K562 (cell line): ENCODE measurements at regions of chr15 and their contacts with region 1.

Region 1: DNA sequence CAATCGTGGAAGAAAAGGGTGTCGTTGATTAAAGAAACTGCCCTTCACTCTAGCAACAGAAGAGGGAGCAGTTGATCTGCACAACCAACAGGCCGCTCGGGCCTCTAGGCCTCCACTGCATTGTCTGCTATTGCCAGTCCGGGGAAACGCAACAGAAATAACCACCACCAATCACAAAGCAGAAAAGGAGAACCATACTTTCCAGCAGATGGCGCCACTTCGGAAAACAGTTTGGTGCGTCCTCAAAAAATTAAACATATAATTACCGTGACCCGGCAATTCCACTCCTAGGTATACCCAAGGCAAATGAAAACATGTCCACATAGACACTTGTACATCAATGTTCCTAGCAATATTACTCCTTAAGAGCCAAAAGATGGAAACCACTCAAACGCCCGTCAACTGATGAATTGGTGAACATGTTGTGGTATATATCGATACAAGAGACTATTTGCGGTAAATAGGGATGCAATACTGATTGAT is 154.1 kb downstream of the TJP1 start:
- DNase-seq: peak; percentile 66 to 84 (median 72)
- ATAC-seq: peak; percentile 99
- H3K4me3 ChIP-seq: no peak overlapping the region
- H3K27ac ChIP-seq: no peak overlapping the region
- H3K4me1 ChIP-seq: peaks cover 3 to 9% of the 10 kb centered on the region in 2 experiments; a peak in 3 of 5 replicates
- H3K27me3 ChIP-seq: peaks cover 4 to 20% of the 10 kb centered on the region in 2 experiments; a peak in 4 of 5 replicates
- CTCF ChIP-seq: peak; percentile 89 to 97 (median 96)
- EP300 ChIP-seq: no peak
- POLR2A ChIP-seq: no peak
- RAD21 ChIP-seq: peak; percentile 84 to 91

Region 2: GRCh38 chr15:29692527-29692926 is 24.4 kb after region 1 on chr15:
- CTCF ChIA-PET with region 1: no interaction called
- POLR2A ChIA-PET with region 1: no interaction called
- in situ Hi-C with region 1: no loop called
- intact Hi-C with region 1: no loop called
- DNase-seq: no peak
- ATAC-seq: peak; percentile 46; the same call in 2 of the 3 replicates
- H3K4me3 ChIP-seq: no peak overlapping the region
- H3K27ac ChIP-seq: no peak overlapping the region
- H3K4me1 ChIP-seq: peaks cover 0 to 15% of the 10 kb centered on the region in 2 experiments; a peak in 3 of 5 replicates
- H3K27me3 ChIP-seq: no peaks in the 10 kb centered on the region
- CTCF ChIP-seq: peak; percentile 29 to 53 (median 34); a peak in 4 of 6 replicates
- EP300 ChIP-seq: no peak
- POLR2A ChIP-seq: no peak
- RAD21 ChIP-seq: peak in 1 of 2 experiments; percentile 43; a peak in 2 of 4 replicates

Region 3: DNA sequence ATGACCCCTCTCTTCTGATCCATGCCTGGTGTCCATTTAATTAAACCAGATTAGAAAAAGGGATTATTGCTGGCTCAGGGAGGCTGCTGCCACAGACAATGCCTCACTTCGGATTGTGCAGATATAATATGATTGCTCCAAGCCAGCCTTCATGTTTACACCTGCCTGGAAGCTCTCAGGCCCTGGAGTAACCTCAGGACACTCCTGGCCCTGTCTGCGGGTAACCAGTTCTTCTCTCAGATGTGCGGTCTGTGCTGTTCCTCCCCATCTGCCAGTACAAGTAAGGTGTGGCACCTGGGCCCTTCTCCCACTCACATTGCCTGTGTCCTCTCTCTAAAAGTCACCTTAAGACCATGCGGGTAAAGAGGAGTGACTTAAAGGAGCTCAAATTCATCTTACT is 405.8 kb after region 1 on chr15:
- CTCF ChIA-PET with region 1: no interaction called
- POLR2A ChIA-PET with region 1: no interaction called
- in situ Hi-C with region 1: loop called (anchors 10 kb)
- intact Hi-C with region 1: no loop called
- DNase-seq: no peak
- ATAC-seq: no peak
- H3K4me3 ChIP-seq: no peak overlapping the region
- H3K27ac ChIP-seq: no peak overlapping the region
- H3K4me1 ChIP-seq: no peaks in the 10 kb centered on the region
- H3K27me3 ChIP-seq: peaks cover 0 to 14% of the 10 kb centered on the region in 2 experiments; a peak in 2 of 5 replicates
- CTCF ChIP-seq: no peak
- EP300 ChIP-seq: no peak
- POLR2A ChIP-seq: no peak
- RAD21 ChIP-seq: no peak